CD4-positive, alpha-beta T cell (primary cell): ENCODE measurements at regions of chr4 and their contacts with region 1.

Region 1: GRCh38 chr4:89110986-89111832 is at the start of gene TIGD2:
- DNase-seq: peak; percentile 78 to 97 (median 88)
- ATAC-seq: peak; percentile 91
- H3K4me3 ChIP-seq: peak within 1 kb of the TSS; percentile 67
- H3K4me3 Mint-ChIP-seq: peak within 1 kb of the TSS; percentile 90
- H3K27ac ChIP-seq: peak within 1 kb of the TSS; percentile 22 to 52
- H3K27ac Mint-ChIP-seq: peak within 1 kb of the TSS; percentile 77
- H3K4me1 ChIP-seq: peaks cover 18% of the 10 kb centered on the region
- H3K4me1 Mint-ChIP-seq: peaks cover 27% of the 10 kb centered on the region
- H3K27me3 ChIP-seq: no peaks in the 10 kb centered on the region
- H3K27me3 Mint-ChIP-seq: no peaks in the 10 kb centered on the region
- CTCF ChIP-seq: peak; percentile 98
- total RNA-seq, gene TIGD2: 3.3 to 3.9 TPM

Region 2: DNA sequence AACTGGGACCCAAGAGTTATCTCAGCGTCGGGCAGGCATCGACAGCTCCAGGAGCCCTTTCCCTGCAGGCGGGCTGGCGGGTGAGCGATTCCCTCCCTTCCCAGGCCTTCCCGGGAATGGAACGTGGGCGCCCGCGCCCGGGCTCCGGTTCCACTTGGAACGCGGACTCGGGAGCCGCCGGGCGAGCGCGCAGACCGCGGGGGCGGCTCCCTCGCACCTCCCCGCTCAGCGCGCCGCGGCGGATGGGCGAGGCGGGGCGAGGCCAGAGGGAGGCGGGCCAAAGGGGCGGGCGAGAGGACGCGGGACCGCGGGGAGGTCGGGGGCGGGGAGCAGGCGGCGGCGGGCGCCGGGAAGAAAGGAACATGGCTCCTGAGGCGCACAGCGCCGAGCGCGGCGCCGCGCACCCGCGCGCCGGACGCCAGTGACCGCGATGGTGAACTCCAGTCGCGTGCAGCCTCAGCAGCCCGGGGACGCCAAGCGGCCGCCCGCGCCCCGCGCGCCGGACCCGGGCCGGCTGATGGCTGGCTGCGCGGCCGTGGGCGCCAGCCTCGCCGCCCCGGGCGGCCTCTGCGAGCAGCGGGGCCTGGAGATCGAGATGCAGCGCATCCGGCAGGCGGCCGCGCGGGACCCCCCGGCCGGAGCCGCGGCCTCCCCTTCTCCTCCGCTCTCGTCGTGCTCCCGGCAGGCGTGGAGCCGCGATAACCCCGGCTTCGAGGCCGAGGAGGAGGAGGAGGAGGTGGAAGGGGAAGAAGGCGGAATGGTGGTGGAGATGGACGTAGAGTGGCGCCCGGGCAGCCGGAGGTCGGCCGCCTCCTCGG is 1103.7 kb before region 1 on chr4 and contains the start of gene PKD2:
- CTCF ChIA-PET with region 1: no interaction called
- POLR2A ChIA-PET with region 1: no interaction called
- intact Hi-C with region 1: loop called in 1 of 2 experiments (anchors 10 kb)
- DNase-seq: peak; percentile 31 to 86 (median 67)
- ATAC-seq: peak; percentile 89
- H3K4me3 ChIP-seq: peak within 1 kb of the TSS; percentile 46
- H3K4me3 Mint-ChIP-seq: peak within 1 kb of the TSS; percentile 97
- H3K27ac ChIP-seq: no peak within 1 kb of the TSS
- H3K27ac Mint-ChIP-seq: no peak within 1 kb of the TSS
- H3K4me1 ChIP-seq: peaks cover 8% of the 10 kb centered on the region
- H3K4me1 Mint-ChIP-seq: peaks cover 28% of the 10 kb centered on the region
- H3K27me3 ChIP-seq: no peaks in the 10 kb centered on the region
- H3K27me3 Mint-ChIP-seq: no peaks in the 10 kb centered on the region
- CTCF ChIP-seq: no peak
- total RNA-seq, gene PKD2: 4.1 to 4.3 TPM

Region 3: DNA sequence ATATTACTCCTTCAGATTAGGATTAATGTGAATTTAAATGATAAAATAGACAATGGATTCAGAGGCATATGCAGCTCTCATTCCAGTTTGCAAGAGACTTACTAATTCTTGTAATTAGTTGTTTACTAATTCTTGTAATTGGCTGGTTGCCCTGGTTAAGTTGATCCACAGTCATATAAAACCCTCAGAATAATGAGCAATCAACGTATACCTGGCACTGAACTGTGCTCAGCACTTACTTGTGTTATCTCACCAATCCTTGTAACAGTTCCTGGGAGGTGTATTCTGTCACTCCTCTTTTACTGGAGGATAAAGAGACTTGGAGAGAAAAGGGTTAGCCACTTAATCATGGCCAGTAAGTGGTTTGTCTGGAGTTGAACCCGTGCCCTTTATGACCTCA is 643.8 kb before region 1 on chr4:
- CTCF ChIA-PET with region 1: no interaction called
- POLR2A ChIA-PET with region 1: no interaction called
- intact Hi-C with region 1: loop called in 1 of 2 experiments (anchors 10 kb)
- DNase-seq: no peak
- ATAC-seq: no peak
- H3K4me3 ChIP-seq: no peak overlapping the region
- H3K4me3 Mint-ChIP-seq: no peak overlapping the region
- H3K27ac ChIP-seq: no peak overlapping the region
- H3K27ac Mint-ChIP-seq: no peak overlapping the region
- H3K4me1 ChIP-seq: peaks cover 2% of the 10 kb centered on the region
- H3K4me1 Mint-ChIP-seq: peaks cover 7% of the 10 kb centered on the region
- H3K27me3 ChIP-seq: no peaks in the 10 kb centered on the region
- H3K27me3 Mint-ChIP-seq: no peaks in the 10 kb centered on the region
- CTCF ChIP-seq: no peak

Region 4: DNA sequence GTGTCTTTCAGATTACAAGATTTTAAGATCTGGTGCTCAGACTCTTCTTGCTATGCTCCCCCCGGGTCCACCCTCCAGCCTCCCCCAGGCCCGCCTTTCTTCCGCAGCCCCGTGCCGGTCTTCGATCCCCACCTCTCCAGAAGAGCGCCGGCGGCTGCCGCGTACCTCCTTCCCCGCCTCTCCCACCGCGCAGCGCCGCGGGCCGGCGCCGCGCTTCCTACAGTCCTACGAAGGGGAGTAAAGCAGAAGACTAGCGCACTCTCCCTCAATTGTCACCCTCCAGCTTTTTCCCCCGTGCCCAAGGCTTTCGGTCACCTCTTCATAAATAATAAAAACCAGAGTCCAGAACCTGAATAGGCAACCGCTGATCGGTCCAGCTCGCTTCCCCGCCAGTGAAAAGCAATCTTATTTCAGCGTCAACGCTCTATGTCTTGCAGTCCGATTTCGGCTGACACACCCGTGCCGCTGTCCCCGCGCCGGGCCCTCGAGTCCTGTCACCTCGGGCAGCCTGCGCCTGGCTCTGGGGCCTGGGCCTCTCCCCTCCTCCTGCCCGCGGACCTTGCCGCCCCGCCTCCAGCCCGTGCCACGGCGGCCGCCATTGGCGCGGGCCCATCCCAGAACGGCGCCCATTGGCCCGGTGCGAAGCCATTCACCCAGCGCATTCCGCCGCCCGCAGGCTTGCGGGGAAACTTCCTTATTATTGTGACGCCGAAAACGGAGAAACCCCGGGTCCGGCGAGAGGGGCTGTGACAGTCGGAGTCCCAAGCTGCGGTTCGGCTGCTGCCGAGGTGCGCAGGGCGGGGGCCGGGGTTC is 519.2 kb before region 1 on chr4 and contains the start of gene HERC3:
- CTCF ChIA-PET with region 1: no interaction called
- POLR2A ChIA-PET with region 1: no interaction called
- intact Hi-C with region 1: loop called in 1 of 2 experiments (anchors 5 kb)
- DNase-seq: peak; percentile 76 to 95 (median 86)
- ATAC-seq: peak; percentile 84
- H3K4me3 ChIP-seq: peak within 1 kb of the TSS; percentile 96
- H3K4me3 Mint-ChIP-seq: peak within 1 kb of the TSS; percentile 100
- H3K27ac ChIP-seq: peak within 1 kb of the TSS; percentile 83 to 93
- H3K27ac Mint-ChIP-seq: peak within 1 kb of the TSS; percentile 99
- H3K4me1 ChIP-seq: peaks cover 23% of the 10 kb centered on the region
- H3K4me1 Mint-ChIP-seq: peaks cover 60% of the 10 kb centered on the region
- H3K27me3 ChIP-seq: no peaks in the 10 kb centered on the region
- H3K27me3 Mint-ChIP-seq: no peaks in the 10 kb centered on the region
- CTCF ChIP-seq: no peak
- total RNA-seq, gene HERC3: 63.1 to 66.4 TPM

Region 5: DNA sequence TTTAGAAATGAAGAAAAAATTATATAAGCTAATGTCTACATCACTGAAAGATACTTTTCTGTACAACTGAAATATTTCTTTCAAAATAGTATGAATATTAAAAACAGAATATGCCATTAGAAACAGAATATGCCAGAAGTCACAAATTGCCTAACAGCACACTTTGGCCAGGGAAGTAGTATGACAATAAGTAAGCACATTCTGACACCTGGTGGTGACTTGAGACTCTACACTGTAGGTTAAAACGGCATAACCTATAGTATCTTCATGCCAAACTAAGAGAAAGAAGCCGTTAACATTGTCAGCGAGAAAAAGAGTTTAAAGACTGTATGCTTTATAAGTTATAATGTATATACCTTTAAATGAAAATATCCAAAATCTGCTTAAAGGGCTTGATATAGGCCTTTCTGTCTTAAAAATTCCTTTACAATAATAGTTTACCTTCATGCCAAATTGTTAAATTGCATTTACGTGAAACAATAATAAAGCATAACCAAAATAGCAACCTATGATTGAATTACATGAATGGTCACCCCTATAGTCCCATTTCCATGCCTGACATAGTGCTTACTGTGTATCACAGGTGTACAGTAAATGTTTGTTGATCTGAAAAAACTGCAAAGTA is 87.0 kb before region 1 on chr4:
- CTCF ChIA-PET with region 1: no interaction called
- POLR2A ChIA-PET with region 1: no interaction called
- intact Hi-C with region 1: loop called in 1 of 2 experiments (anchors 5 kb)
- DNase-seq: peak in 12 of 14 experiments; percentile 15 to 86 (median 42)
- ATAC-seq: peak; percentile 100
- H3K4me3 ChIP-seq: no peak overlapping the region
- H3K4me3 Mint-ChIP-seq: no peak overlapping the region
- H3K27ac ChIP-seq: no peak overlapping the region
- H3K27ac Mint-ChIP-seq: no peak overlapping the region
- H3K4me1 ChIP-seq: peaks cover 3% of the 10 kb centered on the region
- H3K4me1 Mint-ChIP-seq: peaks cover 2% of the 10 kb centered on the region
- H3K27me3 ChIP-seq: no peaks in the 10 kb centered on the region
- H3K27me3 Mint-ChIP-seq: no peaks in the 10 kb centered on the region
- CTCF ChIP-seq: peak; percentile 83

Region 6: GRCh38 chr4:89048906-89049601 is 62.2 kb before region 1 on chr4:
- CTCF ChIA-PET with region 1: no interaction called
- POLR2A ChIA-PET with region 1: no interaction called
- intact Hi-C with region 1: no loop called
- DNase-seq: no peak
- ATAC-seq: no peak
- H3K4me3 ChIP-seq: no peak overlapping the region
- H3K4me3 Mint-ChIP-seq: no peak overlapping the region
- H3K27ac ChIP-seq: no peak overlapping the region
- H3K27ac Mint-ChIP-seq: no peak overlapping the region
- H3K4me1 ChIP-seq: no peaks in the 10 kb centered on the region
- H3K4me1 Mint-ChIP-seq: no peaks in the 10 kb centered on the region
- H3K27me3 ChIP-seq: no peaks in the 10 kb centered on the region
- H3K27me3 Mint-ChIP-seq: no peaks in the 10 kb centered on the region
- CTCF ChIP-seq: no peak

Region 7: DNA sequence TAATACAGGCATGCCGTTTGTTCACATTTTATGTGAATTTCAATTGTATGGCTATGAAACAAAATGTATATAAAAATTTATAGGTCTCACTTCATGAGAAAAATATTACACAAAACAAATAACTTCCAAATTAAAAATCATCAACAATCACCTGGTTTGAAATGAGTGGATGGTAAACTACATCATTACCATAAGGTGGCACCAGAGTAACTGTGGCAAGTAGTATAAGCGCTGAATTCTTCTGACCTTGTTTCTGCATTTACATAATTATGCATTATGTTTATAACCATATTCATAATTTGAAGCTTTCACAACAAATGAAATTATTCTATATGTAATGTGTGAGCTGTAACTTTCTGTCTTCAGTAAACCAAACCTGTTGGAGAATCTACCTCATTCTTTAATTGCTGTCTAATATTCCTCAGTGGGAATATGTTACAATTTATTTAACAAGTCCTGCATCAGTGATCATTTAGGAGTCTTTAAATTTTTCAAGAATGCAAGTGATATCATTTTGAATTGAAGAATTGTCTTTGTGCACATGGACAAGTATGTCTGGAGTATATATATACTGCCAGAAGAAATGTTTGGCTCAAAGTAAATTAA is 838.7 kb after region 1 on chr4:
- CTCF ChIA-PET with region 1: no interaction called
- POLR2A ChIA-PET with region 1: no interaction called
- intact Hi-C with region 1: no loop called
- DNase-seq: no peak
- ATAC-seq: no peak
- H3K4me3 ChIP-seq: no peak overlapping the region
- H3K4me3 Mint-ChIP-seq: no peak overlapping the region
- H3K27ac ChIP-seq: no peak overlapping the region
- H3K27ac Mint-ChIP-seq: no peak overlapping the region
- H3K4me1 ChIP-seq: no peaks in the 10 kb centered on the region
- H3K4me1 Mint-ChIP-seq: no peaks in the 10 kb centered on the region
- H3K27me3 ChIP-seq: no peaks in the 10 kb centered on the region
- H3K27me3 Mint-ChIP-seq: no peaks in the 10 kb centered on the region
- CTCF ChIP-seq: no peak